ENCODE measurements at regions of chr2 and their contacts with region 1.

Region 1: GRCh38 chr2:238060542-238061314 is at the start of gene SCLY:
- H3K4me3 ChIP-seq: peak within 1 kb of the TSS; percentile 95
- H3K27ac ChIP-seq: peak within 1 kb of the TSS; percentile 87
- H3K4me1 ChIP-seq: no peaks in the 10 kb centered on the region
- CTCF ChIP-seq: no peak

Region 2: GRCh38 chr2:237943395-237944094 is 117.2 kb before region 1 on chr2:
- CTCF ChIA-PET with region 1: no interaction called
- POLR2A ChIA-PET with region 1: no interaction called
- H3K4me3 ChIP-seq: no peak overlapping the region
- H3K27ac ChIP-seq: no peak overlapping the region
- H3K4me1 ChIP-seq: no peaks in the 10 kb centered on the region
- CTCF ChIP-seq: no peak

Region 3: DNA sequence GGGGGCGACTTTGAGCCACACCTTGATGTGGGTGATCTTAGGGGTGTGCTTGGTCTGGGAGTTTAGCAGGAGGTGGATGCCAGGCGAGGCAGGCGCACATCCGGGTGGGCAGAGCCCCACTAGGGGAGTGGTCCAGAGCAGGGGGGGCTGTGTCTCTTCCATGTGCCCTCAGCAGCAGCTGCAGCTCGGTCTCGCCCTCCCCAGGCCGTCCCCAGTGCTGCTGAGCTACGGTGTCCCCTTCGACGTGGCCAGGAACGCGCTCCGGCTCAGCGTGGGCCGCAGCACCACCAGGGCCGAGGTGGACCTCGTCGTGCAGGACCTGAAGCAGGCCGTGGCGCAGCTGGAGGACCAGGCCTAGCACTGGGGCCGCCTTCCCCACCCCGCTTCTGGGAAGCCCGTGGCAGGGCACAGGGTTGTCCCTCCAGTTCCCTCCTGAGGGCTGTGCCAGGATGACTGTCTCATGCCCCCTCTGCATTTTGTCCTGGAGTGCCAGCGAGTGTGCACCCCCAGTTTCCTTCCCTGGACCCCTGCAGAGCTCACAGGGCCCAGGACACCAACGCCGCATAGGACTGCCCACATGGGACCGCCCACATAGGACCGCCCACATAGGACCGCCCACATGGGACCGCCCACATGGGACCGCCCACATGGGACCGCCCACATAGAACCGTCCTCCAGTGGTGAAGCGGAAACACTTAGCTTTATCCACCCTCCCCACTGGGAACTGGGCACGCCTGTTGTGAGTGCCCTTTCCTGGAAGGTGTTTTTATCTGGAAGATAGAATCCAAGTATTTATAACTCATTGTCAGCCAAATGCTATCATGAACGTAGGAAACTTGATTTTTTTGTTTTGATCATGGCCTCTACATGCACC is 37.5 kb after region 1 on chr2:
- CTCF ChIA-PET with region 1: no interaction called
- POLR2A ChIA-PET with region 1: interaction called, 12 read pairs
- H3K4me3 ChIP-seq: no peak overlapping the region
- H3K27ac ChIP-seq: no peak overlapping the region
- H3K4me1 ChIP-seq: no peaks in the 10 kb centered on the region
- CTCF ChIP-seq: peak; percentile 17; the same call in 1 of the 2 replicates

Region 4: DNA sequence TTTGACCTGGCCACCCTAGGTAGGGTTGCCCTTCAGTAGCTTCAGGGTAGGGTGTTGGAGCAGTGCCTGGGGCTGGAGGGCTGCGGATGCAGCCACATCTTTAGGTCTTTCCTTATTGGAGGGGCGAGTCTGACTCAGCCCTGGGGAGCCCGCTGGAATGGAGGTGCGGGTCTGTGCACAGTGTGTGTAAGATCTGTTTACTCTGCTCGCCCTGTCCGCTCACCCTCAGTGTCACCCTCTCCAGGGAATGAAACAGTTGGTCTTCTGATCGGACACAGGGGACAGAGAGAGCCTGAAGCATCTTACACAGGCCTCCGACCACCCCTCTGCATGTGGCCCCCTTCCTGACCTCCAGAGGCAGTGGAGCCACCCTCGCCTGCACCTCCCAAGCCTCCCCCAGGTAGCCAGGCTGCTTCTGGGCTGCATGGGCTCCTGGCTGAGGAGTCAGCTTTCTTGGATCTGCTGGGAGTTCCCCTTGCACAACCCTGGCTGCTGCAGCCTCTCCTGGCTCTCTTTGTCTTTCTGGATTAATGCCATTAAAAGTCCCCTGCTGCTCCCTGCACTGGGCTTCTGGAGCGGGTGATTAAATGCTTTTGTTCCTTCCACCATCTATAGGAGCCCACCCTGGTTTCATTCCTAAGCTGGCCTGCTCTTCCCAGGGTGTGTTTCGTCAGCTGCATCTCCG is 448.6 kb after region 1 on chr2:
- CTCF ChIA-PET with region 1: no interaction called
- POLR2A ChIA-PET with region 1: no interaction called
- H3K4me3 ChIP-seq: no peak overlapping the region
- H3K27ac ChIP-seq: no peak overlapping the region
- H3K4me1 ChIP-seq: no peaks in the 10 kb centered on the region
- CTCF ChIP-seq: no peak

Measured in HEK293 (cell line).